Heart left ventricle (tissue), 16 donors: ENCODE measurements at regions of chr3 and their contacts with region 1.

Region 1: GRCh38 chr3:41198950-41199865 is at the start of gene CTNNB1:
- DNase-seq: peak; percentile 94 to 97 (median 95)
- ATAC-seq: peak; percentile 73 to 96 (median 92)
- H3K4me3 ChIP-seq: peak within 1 kb of the TSS; percentile 47 to 90 (median 84)
- H3K27ac ChIP-seq: peak within 1 kb of the TSS; percentile 95 to 99 (median 98)
- H3K4me1 ChIP-seq: peaks cover 5 to 41% (median 31%) of the 10 kb centered on the region in 12 donors
- H3K27me3 ChIP-seq: no peaks in the 10 kb centered on the region
- CTCF ChIP-seq: peak in 5 of 12 donors; percentile 13 to 33 (median 27)
- POLR2A ChIP-seq: peak in 1 of 2 donors; percentile 93
- total RNA-seq, gene CTNNB1: 145 to 301 (median 208) TPM

Region 2: DNA sequence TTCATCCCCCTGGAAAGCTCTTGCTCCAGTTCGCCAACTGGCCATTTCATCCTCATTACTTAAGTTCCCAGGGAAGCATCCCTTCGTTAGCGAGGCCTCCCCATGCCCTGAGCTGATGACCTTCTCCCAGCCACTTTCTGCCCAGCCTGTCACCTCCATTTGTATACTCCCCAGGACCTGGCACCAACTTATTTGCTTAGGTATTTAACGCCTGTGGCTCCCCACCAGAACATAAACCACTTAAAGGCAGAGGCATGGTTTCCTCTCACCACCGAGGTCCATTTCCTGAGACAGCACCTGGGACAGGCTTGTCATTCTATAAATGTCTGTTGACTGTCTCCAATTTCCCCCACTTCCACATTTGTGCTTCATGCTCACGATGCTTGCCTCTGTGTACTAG is 485.4 kb before region 1 on chr3:
- intact Hi-C with region 1: loop called in 4 of 10 experiments (anchors 5 to 10 kb)
- DNase-seq: no peak
- ATAC-seq: no peak
- H3K4me3 ChIP-seq: no peak overlapping the region
- H3K27ac ChIP-seq: no peak overlapping the region
- H3K4me1 ChIP-seq: peaks cover 0 to 24% (median 8%) of the 10 kb centered on the region in 12 donors
- H3K27me3 ChIP-seq: no peaks in the 10 kb centered on the region
- CTCF ChIP-seq: no peak
- POLR2A ChIP-seq: no peak

Region 3: GRCh38 chr3:40780291-40780924 is 418.8 kb before region 1 on chr3:
- intact Hi-C with region 1: loop called in 3 of 10 experiments (anchors 2 to 5 kb)
- DNase-seq: peak; percentile 81 to 90 (median 86)
- ATAC-seq: peak; percentile 82 to 90 (median 84)
- H3K4me3 ChIP-seq: peak overlapping the region in 9 of 12 donors; percentile 2 to 41 (median 29)
- H3K27ac ChIP-seq: peak overlapping the region; percentile 70 to 93 (median 80)
- H3K4me1 ChIP-seq: peaks cover 0 to 32% (median 26%) of the 10 kb centered on the region in 12 donors
- H3K27me3 ChIP-seq: no peaks in the 10 kb centered on the region
- CTCF ChIP-seq: peak in 4 of 12 donors; percentile 13 to 20 (median 16)
- POLR2A ChIP-seq: no peak

Region 4: DNA sequence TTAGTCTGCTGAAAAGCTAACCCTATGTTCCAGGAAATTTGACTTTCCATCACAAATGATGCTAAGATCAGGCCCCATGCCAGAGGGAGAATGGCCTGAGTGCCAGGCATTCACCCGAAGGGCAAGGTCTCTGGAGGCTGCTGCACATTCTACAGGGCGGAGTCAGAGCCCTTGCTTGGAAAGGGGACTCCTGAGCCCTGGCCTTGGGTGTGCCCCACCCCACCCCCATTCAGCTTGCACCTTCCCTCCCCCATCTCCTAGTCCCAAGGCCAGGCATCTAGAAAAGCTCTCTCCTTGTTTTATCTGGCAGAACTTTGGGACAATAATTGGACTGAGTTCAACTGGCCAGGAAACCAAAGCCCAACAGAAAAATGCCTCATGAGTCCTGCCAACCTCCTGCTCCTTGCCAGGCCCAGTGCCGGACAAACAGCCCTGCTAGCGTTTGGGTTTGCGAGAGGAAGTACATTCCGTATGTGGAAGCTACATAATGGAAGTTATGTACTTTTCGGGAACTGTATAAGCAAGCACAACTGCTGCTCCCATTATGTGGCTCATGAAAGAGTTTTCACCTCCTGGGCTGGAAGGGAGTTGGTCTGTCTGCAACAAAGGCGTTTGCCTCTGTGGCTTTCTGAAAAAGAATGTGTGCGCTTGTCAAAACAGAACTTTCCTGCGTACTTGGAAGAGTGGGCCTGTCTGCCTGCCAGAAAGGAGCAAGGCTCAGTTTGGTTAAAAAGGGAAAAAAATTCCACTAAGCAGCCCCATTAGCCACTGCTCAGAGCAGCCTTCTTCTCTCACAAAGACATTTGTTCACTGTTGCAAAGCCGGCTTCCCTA is 321.4 kb before region 1 on chr3:
- intact Hi-C with region 1: loop called in 6 of 10 experiments (anchors 2 to 10 kb)
- DNase-seq: peak; percentile 71 to 84 (median 79)
- ATAC-seq: peak; percentile 90 to 93 (median 92)
- H3K4me3 ChIP-seq: peak overlapping the region in 1 of 12 donors; percentile 17
- H3K27ac ChIP-seq: peak overlapping the region; percentile 13 to 88 (median 74)
- H3K4me1 ChIP-seq: peaks cover 4 to 38% (median 28%) of the 10 kb centered on the region in 12 donors
- H3K27me3 ChIP-seq: no peaks in the 10 kb centered on the region
- CTCF ChIP-seq: peak in 1 of 12 donors; percentile 9
- POLR2A ChIP-seq: no peak

Region 5: GRCh38 chr3:41026394-41027177 is 172.6 kb before region 1 on chr3:
- intact Hi-C with region 1: loop called in 1 of 10 experiments (anchors 2 kb)
- DNase-seq: peak in 4 of 5 donors; percentile 81 to 88 (median 84)
- ATAC-seq: peak; percentile 86 to 98 (median 96)
- H3K4me3 ChIP-seq: no peak overlapping the region
- H3K27ac ChIP-seq: peak overlapping the region in 7 of 12 donors; percentile 14 to 67 (median 36)
- H3K4me1 ChIP-seq: peaks cover 0 to 18% (median 11%) of the 10 kb centered on the region in 12 donors
- H3K27me3 ChIP-seq: no peaks in the 10 kb centered on the region
- CTCF ChIP-seq: no peak
- POLR2A ChIP-seq: no peak

Region 6: DNA sequence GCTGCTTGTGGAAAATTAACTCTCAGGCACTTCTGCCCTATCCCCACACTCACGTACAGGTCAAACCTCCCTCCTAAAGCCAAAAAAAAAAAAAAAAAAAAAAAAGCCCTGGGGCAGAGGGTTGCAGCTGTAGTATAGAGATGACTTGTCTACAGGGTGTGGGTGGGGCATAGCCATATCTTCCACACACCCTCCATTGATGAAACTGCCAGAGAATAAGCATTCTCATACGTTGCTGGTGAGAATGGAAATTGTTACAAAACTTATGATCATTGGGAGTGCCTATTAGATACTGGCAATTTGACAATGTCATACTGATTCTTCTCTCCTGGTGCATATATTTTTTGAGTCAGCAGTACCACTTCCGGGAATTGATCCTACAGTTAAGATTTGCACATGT is 10.9 kb before region 1 on chr3:
- intact Hi-C with region 1: no loop called
- DNase-seq: no peak
- ATAC-seq: no peak
- H3K4me3 ChIP-seq: no peak overlapping the region
- H3K27ac ChIP-seq: no peak overlapping the region
- H3K4me1 ChIP-seq: no peaks in the 10 kb centered on the region
- H3K27me3 ChIP-seq: no peaks in the 10 kb centered on the region
- CTCF ChIP-seq: no peak
- POLR2A ChIP-seq: no peak